ENCODE measurements at regions of chr5 and their contacts with region 1.

Region 1: DNA sequence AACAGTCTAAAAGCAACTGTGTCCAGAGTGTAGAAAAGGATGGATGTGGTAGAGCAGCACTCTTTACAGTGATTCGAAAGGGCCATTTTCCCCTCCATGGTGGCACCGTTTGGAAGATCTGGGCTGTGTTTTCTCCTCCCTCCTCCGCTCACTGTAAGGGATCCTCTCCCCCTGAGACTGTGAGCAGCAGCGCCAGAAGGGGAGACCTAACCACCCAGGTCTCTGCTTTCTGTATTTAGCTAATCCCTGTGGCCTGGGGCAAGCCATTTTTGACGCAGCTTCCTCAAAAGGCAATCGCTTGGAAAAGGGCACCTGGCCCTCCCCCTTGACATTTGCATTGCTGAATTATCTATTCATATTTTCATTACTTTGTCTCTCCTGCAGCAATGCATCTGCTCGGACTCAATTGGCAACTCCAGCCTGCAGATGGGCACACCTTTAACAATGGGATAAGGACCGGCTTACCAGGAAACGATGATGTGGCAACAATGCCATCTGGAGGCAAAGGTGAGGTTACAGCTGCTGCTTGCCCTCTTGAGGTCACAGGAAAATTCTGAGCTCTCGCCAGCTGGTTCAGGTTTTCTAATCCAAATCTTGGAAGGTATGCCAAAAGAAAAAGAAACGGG is 244.3 kb upstream of the WWC1 start:
- DNase-seq: no peak
- H3K4me3 Mint-ChIP-seq: no peak overlapping the region
- H3K27ac Mint-ChIP-seq: no peak overlapping the region
- H3K4me1 Mint-ChIP-seq: no peaks in the 10 kb centered on the region
- H3K27me3 Mint-ChIP-seq: no peaks in the 10 kb centered on the region

Region 2: DNA sequence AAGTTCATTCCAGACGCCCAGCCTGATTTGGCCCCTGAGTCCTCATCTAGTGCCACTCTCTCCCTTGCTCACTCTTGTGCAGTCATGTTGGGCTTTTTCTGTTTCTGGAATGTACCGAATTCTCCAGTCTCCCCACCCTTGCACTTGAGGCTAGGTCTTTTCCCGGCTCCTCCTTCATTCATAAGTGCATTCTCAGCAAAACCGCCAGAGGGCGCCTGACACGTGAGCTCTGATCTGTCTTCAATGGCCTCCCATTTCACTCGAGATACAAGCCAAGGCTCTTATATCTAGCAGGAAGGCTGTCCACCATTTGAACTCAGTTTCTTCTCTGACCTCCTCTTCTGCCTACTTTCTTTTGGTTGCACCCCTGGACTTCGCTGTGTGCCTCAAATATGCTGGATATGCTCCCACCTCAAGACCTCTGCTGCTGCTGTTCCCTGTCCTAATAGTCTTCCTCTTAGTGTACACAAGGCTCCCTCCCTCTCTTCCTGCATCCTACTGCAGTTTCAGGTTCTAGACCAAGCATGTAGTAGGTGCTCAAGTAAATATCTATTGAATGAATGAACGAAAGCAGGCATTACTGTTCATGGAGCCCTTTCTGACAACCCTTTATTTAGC is 323.8 kb before region 1 on chr5:
- CTCF ChIA-PET with region 1: interaction called, 11 read pairs
- DNase-seq: peak; percentile 70
- H3K4me3 Mint-ChIP-seq: no peak overlapping the region
- H3K27ac Mint-ChIP-seq: no peak overlapping the region
- H3K4me1 Mint-ChIP-seq: no peaks in the 10 kb centered on the region
- H3K27me3 Mint-ChIP-seq: no peaks in the 10 kb centered on the region

Measured in activated naive CD4-positive, alpha-beta T cell treated with anti-CD3 and anti-CD28 coated beads, Interleukin-2, amount 10 ng/mL, durations not matched to agents 7 days and 5 days (primary cell).